Activated CD4-positive, alpha-beta T cell treated with anti-CD3 and anti-CD28 coated beads, Interleukin-2, amount 10 ng/mL, durations not matched to agents 24 days and 14 days (primary cell): ENCODE measurements at regions of chr1 and their contacts with region 1.

Region 1: GRCh38 chr1:168234846-168235547 is 9.2 kb downstream of the SFT2D2 start:
- DNase-seq: peak; percentile 85
- H3K4me3 Mint-ChIP-seq: peak overlapping the region; percentile 52
- H3K27ac Mint-ChIP-seq: peak overlapping the region; percentile 92
- H3K4me1 Mint-ChIP-seq: peaks cover 67% of the 10 kb centered on the region
- H3K27me3 Mint-ChIP-seq: no peaks in the 10 kb centered on the region

Region 2: DNA sequence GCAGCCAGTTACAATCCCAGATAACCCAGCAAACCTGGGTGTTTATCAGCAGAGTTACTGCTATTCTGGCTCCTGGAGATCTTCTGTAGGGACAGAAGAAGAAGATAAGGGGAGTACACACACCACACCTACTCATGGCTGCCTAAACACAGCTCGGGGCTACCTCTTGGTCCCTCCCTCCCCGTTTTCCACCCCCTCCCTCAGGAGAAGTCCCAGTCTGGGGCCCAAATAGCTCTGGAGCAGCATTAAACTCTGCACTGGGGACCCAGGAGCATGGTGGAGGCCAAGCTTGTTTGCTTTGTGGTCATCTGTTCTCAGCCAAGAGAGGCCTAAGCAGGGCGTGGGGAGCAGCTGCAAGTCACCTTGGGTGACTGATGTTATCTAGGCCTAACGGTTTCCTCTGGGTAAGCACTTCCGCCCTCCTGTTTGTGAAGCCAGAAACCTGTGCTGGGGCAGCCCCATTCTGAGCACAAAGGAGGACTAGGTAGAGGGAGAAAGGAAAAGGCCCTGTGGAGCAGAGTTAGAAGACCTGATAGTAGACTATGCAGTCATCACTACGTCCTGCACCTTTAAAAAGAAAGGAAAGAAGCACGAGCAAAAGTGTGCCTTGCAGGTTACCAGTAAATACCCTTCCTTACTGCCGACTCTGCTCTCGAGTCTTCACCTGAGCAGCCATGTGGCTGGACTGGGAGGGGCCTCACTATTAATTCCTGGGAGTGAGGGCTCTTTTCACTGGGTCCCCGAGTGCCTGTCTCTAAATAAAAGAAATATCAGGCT is 606.9 kb before region 1 on chr1:
- intact Hi-C with region 1: loop called (anchors 5 kb)
- DNase-seq: peak; percentile 95
- H3K4me3 Mint-ChIP-seq: peak overlapping the region; percentile 94
- H3K27ac Mint-ChIP-seq: peak overlapping the region; percentile 92
- H3K4me1 Mint-ChIP-seq: peaks cover 57% of the 10 kb centered on the region
- H3K27me3 Mint-ChIP-seq: no peaks in the 10 kb centered on the region

Region 3: GRCh38 chr1:168321945-168322344 is 86.9 kb after region 1 on chr1:
- intact Hi-C with region 1: loop called (anchors 2 kb)
- DNase-seq: no peak
- H3K4me3 Mint-ChIP-seq: no peak overlapping the region
- H3K27ac Mint-ChIP-seq: no peak overlapping the region
- H3K4me1 Mint-ChIP-seq: peaks cover 20% of the 10 kb centered on the region
- H3K27me3 Mint-ChIP-seq: no peaks in the 10 kb centered on the region

Region 4: DNA sequence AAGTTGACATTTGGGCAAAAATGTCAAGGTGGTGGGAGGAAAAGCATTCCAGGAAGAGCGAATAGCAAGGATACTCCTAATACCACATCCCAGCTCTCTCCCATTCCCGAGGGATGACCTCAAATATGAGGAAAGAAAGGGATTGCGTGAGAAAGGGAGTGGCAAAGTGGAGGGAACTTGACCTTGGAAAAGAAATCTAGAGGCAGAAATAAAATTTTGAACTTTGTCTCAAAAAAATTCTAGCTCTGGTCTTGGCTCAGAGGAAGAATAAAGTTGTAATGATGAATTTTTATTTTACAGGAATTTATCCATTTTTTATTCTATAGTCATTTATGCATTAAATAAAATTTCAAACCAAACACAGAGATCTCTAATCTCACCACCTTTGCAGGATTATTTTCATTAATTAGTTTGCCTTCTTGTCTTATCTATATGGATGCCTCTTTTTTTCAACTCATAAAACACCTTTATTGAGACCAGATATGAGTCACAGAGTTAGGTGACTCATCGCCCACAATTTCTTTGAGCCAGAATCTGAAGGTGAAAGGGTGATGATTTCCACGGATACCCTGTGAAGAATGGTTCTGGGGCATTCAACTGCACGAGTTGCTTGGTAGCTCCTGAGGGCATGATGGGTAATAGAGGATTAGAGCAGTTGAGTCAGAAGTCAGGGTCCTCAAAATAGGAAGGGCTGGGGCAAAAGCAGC is 173.7 kb after region 1 on chr1:
- intact Hi-C with region 1: loop called (anchors 5 kb)
- DNase-seq: peak; percentile 90
- H3K4me3 Mint-ChIP-seq: peak overlapping the region; percentile 53
- H3K27ac Mint-ChIP-seq: peak overlapping the region; percentile 86
- H3K4me1 Mint-ChIP-seq: peaks cover 39% of the 10 kb centered on the region
- H3K27me3 Mint-ChIP-seq: no peaks in the 10 kb centered on the region

Region 5: GRCh38 chr1:168520052-168520751 is 285.2 kb after region 1 on chr1:
- intact Hi-C with region 1: loop called (anchors 5 kb)
- DNase-seq: peak; percentile 81
- H3K4me3 Mint-ChIP-seq: peak overlapping the region; percentile 79
- H3K27ac Mint-ChIP-seq: peak overlapping the region; percentile 91
- H3K4me1 Mint-ChIP-seq: peaks cover 51% of the 10 kb centered on the region
- H3K27me3 Mint-ChIP-seq: no peaks in the 10 kb centered on the region

Region 6: GRCh38 chr1:169586395-169587255 is 1351.6 kb after region 1 on chr1 and contains the start of gene F5:
- intact Hi-C with region 1: loop called (anchors 10 kb)
- DNase-seq: peak; percentile 92
- H3K4me3 Mint-ChIP-seq: peak within 1 kb of the TSS; percentile 95
- H3K27ac Mint-ChIP-seq: peak within 1 kb of the TSS; percentile 92
- H3K4me1 Mint-ChIP-seq: peaks cover 62% of the 10 kb centered on the region
- H3K27me3 Mint-ChIP-seq: no peaks in the 10 kb centered on the region
- total RNA-seq, gene F5: 46.3 and 51.3 TPM in 2 replicates